Activated T-helper 2 cell treated with anti-CD3 and anti-CD28 coated beads, Interferon-gamma antibody, Interleukin-2, Interleukin-4, amounts not matched to agents 10 μg/mL and 5 μg/mL and 100 μg/mL, durations not matched to agents 14 hours and 24 hours and 36 hours (primary cell): ENCODE measurements at regions of chr7 and their contacts with region 1.

Region 1: GRCh38 chr7:130205084-130205947 is at the start of gene TMEM209:
- DNase-seq: peak; percentile 95
- H3K4me3 Mint-ChIP-seq: peak within 1 kb of the TSS; percentile 99
- H3K27ac Mint-ChIP-seq: peak within 1 kb of the TSS; percentile 99
- H3K4me1 Mint-ChIP-seq: peaks cover 18% of the 10 kb centered on the region
- H3K27me3 Mint-ChIP-seq: no peaks in the 10 kb centered on the region
- total RNA-seq, gene TMEM209: 41.6 and 43.2 TPM in 2 replicates

Region 2: DNA sequence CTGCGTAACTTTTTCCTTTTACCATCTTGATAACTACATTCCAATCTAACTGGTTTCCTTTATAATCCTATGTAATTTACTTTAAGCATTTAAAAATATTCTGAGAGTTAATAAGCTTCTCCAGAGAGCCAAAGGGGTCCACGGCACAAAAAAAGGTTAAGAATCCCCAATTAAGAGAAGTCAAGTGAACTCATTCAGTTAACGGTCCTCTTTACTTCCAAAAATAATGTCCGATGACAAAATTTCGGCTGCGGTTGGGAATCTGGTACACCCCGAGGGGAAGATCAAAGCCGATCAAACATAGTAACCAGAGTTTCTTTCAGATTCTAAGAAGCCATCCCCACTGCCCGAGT is 154.6 kb before region 1 on chr7:
- intact Hi-C with region 1: loop called (anchors 1 kb)
- DNase-seq: no peak
- H3K4me3 Mint-ChIP-seq: peak overlapping the region; percentile 99
- H3K27ac Mint-ChIP-seq: peak overlapping the region; percentile 97
- H3K4me1 Mint-ChIP-seq: peaks cover 10% of the 10 kb centered on the region
- H3K27me3 Mint-ChIP-seq: no peaks in the 10 kb centered on the region

Region 3: DNA sequence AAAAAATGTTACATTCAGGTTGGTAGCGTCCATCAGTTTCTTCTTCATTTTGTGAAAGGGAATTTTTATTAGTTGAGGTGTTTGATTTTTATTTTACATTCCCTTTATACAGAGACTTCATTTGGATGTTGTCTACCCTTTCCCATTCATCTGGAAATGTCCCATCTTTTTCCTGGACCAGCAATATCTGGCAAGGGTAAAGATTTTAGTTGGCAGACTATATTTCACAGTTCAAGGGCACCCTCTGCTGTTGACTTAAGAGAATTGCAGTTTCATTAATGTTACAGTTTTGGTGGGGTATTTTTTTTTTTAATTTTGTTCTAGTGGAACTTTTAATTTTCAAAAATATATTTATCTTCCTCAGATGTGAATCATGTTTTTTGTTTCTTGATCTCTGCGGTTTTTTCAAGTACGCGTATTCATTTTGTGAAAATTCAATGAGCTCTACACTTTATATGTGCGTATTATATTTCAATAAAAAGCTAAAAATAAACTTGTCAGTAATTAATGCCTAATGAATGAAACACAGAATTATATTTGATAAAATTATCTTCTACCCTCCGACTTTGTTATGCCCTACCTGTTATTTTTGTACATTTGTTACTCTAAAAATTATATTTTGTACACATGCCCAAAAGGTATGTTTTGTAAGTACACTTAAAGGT is 626.6 kb after region 1 on chr7:
- intact Hi-C with region 1: no loop called
- DNase-seq: no peak
- H3K4me3 Mint-ChIP-seq: no peak overlapping the region
- H3K27ac Mint-ChIP-seq: no peak overlapping the region
- H3K4me1 Mint-ChIP-seq: no peaks in the 10 kb centered on the region
- H3K27me3 Mint-ChIP-seq: peaks cover 15% of the 10 kb centered on the region